T-cell (primary cell): ENCODE measurements at regions of chr3 and their contacts with region 1.

Region 1: GRCh38 chr3:114351123-114351821 is 57.4 kb downstream of the TIGIT start:
- DNase-seq: no peak
- ATAC-seq: no peak
- H3K4me3 ChIP-seq: no peak overlapping the region
- H3K4me3 Mint-ChIP-seq: no peak overlapping the region
- H3K27ac ChIP-seq: no peak overlapping the region
- H3K27ac Mint-ChIP-seq: no peak overlapping the region
- H3K4me1 ChIP-seq: no peaks in the 10 kb centered on the region
- H3K4me1 Mint-ChIP-seq: peaks cover 1 to 3% (median 2%) of the 10 kb centered on the region in 3 donors
- H3K27me3 ChIP-seq: no peaks in the 10 kb centered on the region
- H3K27me3 Mint-ChIP-seq: no peaks in the 10 kb centered on the region

Region 2: DNA sequence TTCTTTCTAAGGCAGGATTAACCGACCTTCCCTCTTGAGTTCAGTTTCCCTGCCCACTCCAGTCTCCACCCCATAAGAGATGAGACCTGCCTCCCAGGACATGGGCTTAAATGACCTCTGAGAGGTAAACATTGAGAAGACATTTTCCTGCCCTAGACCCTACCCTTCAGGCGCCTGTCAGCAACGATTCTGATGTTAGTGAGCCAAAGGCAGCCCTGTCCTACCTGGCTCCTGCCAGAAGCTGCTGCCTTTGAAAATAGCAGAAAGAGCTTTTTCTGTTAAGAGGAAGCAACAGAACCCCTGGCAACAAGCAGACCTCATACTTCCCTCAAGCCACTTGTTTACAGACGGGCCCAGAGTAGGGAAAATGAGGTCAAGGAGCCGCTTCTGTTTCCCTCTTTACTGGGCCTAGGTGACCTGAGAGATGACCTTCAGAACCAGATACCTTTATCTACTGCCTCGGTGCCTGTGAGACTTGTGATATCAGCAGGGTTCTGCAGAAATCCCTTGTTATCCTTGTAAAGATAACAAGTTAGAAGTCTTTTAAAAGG is 1556.6 kb before region 1 on chr3:
- CTCF ChIA-PET with region 1: no interaction called
- POLR2A ChIA-PET with region 1: interaction called in 1 of 2 experiments, 10 read pairs
- DNase-seq: peak in 3 of 35 experiments; percentile 6 to 17 (median 9)
- ATAC-seq: peak; percentile 47 to 70 (median 56)
- H3K4me3 ChIP-seq: no peak overlapping the region
- H3K4me3 Mint-ChIP-seq: peak overlapping the region in 1 of 3 donors; percentile 49
- H3K27ac ChIP-seq: peak overlapping the region; percentile 32
- H3K27ac Mint-ChIP-seq: peak overlapping the region; percentile 19 to 82
- H3K4me1 ChIP-seq: peaks cover 15 to 27% of the 10 kb centered on the region in 2 experiments
- H3K4me1 Mint-ChIP-seq: peaks cover 30 to 36% (median 35%) of the 10 kb centered on the region in 3 donors
- H3K27me3 ChIP-seq: no peaks in the 10 kb centered on the region
- H3K27me3 Mint-ChIP-seq: no peaks in the 10 kb centered on the region

Region 3: DNA sequence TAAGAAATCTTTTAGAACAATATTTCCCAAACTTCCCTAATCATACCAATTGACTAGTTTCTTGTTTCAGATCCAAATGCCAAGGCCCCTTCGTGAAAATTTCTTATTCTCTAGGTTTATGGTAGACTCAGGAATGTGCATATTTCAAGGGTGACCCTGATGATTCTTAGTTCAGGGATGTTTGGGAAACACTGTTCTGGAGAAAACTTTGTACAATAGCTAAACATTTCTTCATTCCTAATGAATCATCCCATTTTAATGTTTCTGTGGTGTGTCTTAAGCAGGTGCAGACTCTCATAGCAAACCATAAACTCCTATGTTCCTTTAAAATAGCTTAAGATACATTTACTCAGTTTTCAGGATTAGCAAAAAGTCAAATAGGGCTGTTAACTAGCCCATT is 257.0 kb after region 1 on chr3:
- CTCF ChIA-PET with region 1: no interaction called
- POLR2A ChIA-PET with region 1: no interaction called
- DNase-seq: no peak
- ATAC-seq: no peak
- H3K4me3 ChIP-seq: no peak overlapping the region
- H3K4me3 Mint-ChIP-seq: no peak overlapping the region
- H3K27ac ChIP-seq: no peak overlapping the region
- H3K27ac Mint-ChIP-seq: no peak overlapping the region
- H3K4me1 ChIP-seq: no peaks in the 10 kb centered on the region
- H3K4me1 Mint-ChIP-seq: peaks cover 0 to 5% (median 3%) of the 10 kb centered on the region in 3 donors
- H3K27me3 ChIP-seq: no peaks in the 10 kb centered on the region
- H3K27me3 Mint-ChIP-seq: no peaks in the 10 kb centered on the region